Mucosa of descending colon (tissue), 3 donors: ENCODE measurements at regions of chr9 and their contacts with region 1.

Region 1: DNA sequence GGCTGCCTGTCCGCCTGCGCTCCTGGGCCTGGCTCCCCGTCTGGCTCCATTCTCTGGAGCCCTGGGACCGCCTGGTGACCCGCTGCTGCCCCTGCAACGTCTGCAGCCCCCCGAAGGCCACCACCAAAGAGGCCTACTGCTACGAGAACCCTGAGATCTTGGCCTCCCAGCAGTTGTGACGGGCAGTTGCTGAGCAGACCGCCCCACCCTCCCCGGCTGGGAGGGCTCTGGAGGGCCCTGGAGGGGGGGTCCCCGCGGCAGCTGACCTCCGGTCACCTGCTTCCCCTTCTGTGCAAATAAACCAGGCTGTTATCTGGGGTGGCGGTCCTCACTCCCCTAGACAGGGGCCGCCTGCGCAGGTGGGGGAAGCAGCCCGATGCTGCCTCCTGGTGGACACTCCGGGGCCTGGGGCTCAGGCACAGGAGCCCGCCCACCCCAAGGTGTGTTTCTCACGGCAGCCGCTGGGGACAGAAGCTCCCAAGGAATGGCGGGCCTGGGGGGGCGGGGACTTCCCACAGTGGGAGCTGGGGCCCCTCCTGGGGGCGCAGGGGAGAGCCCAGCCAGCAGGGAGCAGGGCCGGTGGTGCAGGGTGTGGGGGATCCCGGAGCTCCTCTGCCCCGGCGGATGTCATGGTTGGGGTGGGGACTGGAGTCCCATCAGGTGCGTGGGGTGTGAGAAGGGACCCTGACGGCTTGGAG is 4.7 kb upstream of the TUBB4B start:
- DNase-seq: peak; percentile 92 to 96 (median 93)
- ATAC-seq: peak; percentile 51
- H3K4me3 ChIP-seq: no peak overlapping the region
- H3K4me1 ChIP-seq: peaks cover 46% of the 10 kb centered on the region
- CTCF ChIP-seq: peak; percentile 99

Region 2: DNA sequence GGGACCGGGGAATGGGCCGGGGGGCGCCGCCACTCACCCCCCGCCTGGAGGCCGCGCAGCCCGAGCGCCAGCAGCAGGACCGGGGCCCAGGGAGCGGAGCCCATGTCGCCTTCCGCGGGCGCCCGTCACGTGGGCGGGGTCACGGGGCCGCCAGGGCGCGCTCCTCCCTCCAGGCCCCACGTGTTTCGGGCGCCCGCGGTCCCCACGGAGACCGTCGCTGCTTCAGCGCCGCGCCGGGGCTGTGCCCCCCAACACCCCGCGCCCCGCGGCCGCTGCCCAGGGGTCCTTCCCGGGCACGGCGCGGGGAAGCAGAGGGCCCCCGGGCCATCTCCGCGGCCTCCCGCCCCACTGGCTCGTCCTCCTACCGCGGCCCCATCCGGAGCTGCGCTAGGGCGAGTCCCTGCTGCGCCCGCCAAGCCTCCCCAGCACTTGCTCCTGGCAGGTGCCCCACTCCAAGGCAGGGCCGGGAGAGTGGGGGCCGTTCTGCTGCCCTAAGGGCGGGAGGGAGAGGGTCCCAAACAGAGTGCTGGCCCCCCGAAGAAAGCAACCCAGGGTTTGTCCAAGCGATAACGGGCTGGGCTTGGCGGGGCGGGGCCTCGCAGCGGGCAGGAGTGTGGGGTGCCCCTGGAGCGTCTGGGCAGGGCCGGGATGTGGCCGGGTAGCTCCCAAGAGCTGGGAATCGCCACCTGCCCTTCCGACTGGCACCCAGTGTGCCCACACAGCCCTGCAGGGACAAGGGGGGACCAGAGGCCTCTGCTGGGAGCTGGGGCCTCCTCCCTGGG is 121.6 kb before region 1 on chr9 and contains the start of gene DPP7:
- intact Hi-C with region 1: loop called (anchors 5 kb)
- DNase-seq: peak; percentile 77 to 83 (median 82)
- ATAC-seq: peak; percentile 93
- H3K4me3 ChIP-seq: peak within 1 kb of the TSS; percentile 31
- H3K4me1 ChIP-seq: peaks cover 6% of the 10 kb centered on the region
- CTCF ChIP-seq: no peak
- total RNA-seq, gene DPP7: 47.0 to 114 (median 51.5) TPM

Region 3: DNA sequence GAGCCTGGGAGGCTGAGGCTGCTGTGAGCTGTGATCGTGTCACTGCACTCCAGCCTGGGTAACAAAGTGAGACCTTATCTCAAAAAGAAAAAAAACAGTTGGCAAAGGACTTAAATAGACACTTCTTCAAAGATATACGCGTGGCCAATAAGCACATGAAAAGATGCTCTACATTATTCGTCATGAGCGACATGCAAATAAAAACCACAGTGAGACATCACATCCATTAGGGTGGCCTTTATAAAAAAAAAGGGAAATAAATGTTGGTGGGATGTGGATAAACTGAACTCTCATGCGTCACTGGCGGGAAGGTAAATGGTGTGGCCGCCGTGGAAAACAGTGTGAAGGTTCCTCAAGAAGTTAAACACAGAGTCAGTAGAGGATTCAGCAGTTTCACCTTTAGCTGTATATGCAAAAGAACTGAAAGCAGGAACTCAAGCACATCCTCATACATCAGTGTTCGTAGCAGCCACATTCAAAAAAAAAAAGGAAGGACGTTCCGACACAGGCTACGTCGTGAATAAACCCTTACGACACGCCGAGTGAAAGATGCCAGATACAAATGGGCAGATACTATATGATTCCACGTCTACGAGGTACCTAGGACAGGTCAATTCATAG is 90.2 kb after region 1 on chr9:
- intact Hi-C with region 1: no loop called
- DNase-seq: no peak
- ATAC-seq: peak; percentile 61
- H3K4me3 ChIP-seq: no peak overlapping the region
- H3K4me1 ChIP-seq: no peaks in the 10 kb centered on the region
- CTCF ChIP-seq: no peak